Motor neuron (in vitro differentiated cells): ENCODE measurements at regions of chr12 and their contacts with region 1.

Region 1: DNA sequence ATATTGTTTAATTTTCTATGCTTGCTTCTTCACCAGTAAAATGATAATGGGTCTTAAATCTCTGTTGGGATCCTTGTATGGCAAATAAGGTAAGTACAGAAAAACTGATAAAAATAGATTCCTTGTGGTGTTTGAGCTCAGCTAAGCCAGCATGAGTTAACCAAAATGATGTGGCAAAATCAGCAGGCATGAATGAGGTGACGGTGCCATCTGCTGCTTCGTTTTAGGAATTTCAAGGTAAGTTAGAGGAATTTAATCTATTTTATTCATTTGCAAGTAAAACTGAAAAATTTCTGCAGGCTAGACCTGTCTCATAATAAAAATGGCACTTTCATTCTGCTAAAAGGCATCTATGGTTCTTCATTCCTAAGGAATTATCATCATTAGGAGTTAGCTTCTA is 10.0 kb upstream of the CLEC7A start:
- ATAC-seq: peak in 3 of 8 experiments; percentile 43 to 68 (median 45)
- H3K4me3 ChIP-seq: no peak overlapping the region
- H3K27ac ChIP-seq: no peak overlapping the region
- H3K4me1 ChIP-seq: no peaks in the 10 kb centered on the region

Region 2: DNA sequence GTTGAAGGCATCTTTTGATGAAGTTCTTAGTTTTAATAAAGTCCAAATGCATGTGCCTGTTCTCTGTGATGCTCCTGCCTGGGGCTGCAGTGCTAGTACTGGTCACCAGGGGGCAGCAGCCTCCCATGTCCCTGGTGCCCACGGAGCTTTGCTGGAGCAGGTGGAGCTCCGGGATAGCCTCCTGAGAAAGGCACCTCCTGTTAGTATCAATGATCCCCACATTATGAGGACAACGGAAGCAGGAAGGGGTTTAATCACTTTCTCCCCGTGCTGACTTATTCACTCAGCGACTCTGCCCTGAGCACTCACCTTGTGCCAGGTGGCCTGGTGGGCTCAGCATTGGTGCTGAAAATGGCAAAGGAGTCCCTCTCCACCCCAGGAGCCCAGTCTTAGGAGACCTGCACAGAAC is 808.8 kb before region 1 on chr12:
- in situ Hi-C with region 1: loop called in 1 of 9 experiments (anchors 25 kb)
- ATAC-seq: peak; percentile 75 to 94 (median 80)
- H3K4me3 ChIP-seq: no peak overlapping the region
- H3K27ac ChIP-seq: no peak overlapping the region
- H3K4me1 ChIP-seq: peaks cover 0 to 6% of the 10 kb centered on the region in 2 donors

Region 3: GRCh38 chr12:9741726-9742125 is 398.3 kb before region 1 on chr12:
- in situ Hi-C with region 1: loop called in 3 of 9 experiments (anchors 25 kb)
- ATAC-seq: no peak
- H3K4me3 ChIP-seq: no peak overlapping the region
- H3K27ac ChIP-seq: no peak overlapping the region
- H3K4me1 ChIP-seq: no peaks in the 10 kb centered on the region

Region 4: GRCh38 chr12:9813821-9814809 is 325.9 kb before region 1 on chr12:
- in situ Hi-C with region 1: loop called in 1 of 9 experiments (anchors 25 kb)
- ATAC-seq: peak in 4 of 8 experiments; percentile 27 to 98 (median 86)
- H3K4me3 ChIP-seq: no peak overlapping the region
- H3K27ac ChIP-seq: no peak overlapping the region
- H3K4me1 ChIP-seq: no peaks in the 10 kb centered on the region

Region 5: GRCh38 chr12:9925708-9926393 is 214.2 kb before region 1 on chr12:
- in situ Hi-C with region 1: loop called in 2 of 9 experiments (anchors 25 kb)
- ATAC-seq: peak in 4 of 8 experiments; percentile 24 to 73 (median 63)
- H3K4me3 ChIP-seq: no peak overlapping the region
- H3K27ac ChIP-seq: no peak overlapping the region
- H3K4me1 ChIP-seq: no peaks in the 10 kb centered on the region

Region 6: GRCh38 chr12:9961106-9961505 is 178.9 kb before region 1 on chr12:
- in situ Hi-C with region 1: no loop called
- ATAC-seq: no peak
- H3K4me3 ChIP-seq: no peak overlapping the region
- H3K27ac ChIP-seq: no peak overlapping the region
- H3K4me1 ChIP-seq: no peaks in the 10 kb centered on the region

Region 7: GRCh38 chr12:9992296-9992695 is 147.7 kb before region 1 on chr12:
- in situ Hi-C with region 1: no loop called
- ATAC-seq: no peak
- H3K4me3 ChIP-seq: no peak overlapping the region
- H3K27ac ChIP-seq: no peak overlapping the region
- H3K4me1 ChIP-seq: no peaks in the 10 kb centered on the region

Region 8: DNA sequence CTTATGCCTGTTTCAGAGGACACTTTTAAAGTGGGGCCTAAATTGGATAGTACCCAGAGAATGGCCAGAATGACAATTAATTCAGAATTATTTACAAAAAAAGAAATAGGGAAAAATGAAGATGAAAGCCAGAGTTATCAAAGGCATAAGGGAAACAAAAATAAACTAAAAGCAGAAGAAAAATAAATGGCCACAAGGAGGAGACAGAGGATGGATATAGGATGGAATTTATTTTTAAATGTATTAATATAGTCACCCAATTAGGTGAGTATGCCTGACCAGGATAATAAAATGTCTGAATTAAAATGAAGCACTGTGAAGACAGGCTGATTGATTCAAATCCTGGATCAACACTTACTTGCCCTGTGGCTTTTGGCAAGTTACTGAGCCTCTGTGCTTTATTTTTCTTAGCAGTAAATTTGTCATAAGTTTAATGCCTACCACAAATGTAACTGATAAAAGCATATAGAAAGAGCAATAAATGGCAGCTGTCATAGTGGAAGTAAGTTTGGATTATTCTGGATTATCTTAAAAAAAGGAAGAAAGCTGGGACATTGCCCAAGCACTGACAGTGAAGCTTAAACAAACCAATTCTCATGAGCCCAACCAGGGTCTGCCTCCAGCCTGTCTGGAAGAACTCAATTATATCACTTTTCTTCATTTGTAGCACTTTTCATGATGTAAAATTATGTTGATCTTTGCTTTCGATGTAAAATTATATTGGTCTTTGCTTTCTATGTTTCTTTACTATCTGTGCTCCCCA is 106.0 kb before region 1 on chr12:
- in situ Hi-C with region 1: loop called in 2 of 9 experiments (anchors 25 kb)
- ATAC-seq: peak in 2 of 8 experiments; percentile 36 to 38
- H3K4me3 ChIP-seq: no peak overlapping the region
- H3K27ac ChIP-seq: no peak overlapping the region
- H3K4me1 ChIP-seq: no peaks in the 10 kb centered on the region

Region 9: GRCh38 chr12:10285919-10286318 is 145.9 kb after region 1 on chr12:
- in situ Hi-C with region 1: no loop called
- ATAC-seq: no peak
- H3K4me3 ChIP-seq: no peak overlapping the region
- H3K27ac ChIP-seq: no peak overlapping the region
- H3K4me1 ChIP-seq: no peaks in the 10 kb centered on the region